ENCODE measurements at regions of chr12 and their contacts with region 1.

Region 1: GRCh38 chr12:85448548-85449139 is 168.6 kb downstream of the ALX1 start:
- DNase-seq: peak; percentile 11
- H3K4me3 ChIP-seq: no peak overlapping the region
- H3K27ac ChIP-seq: no peak overlapping the region
- H3K4me1 ChIP-seq: no peaks in the 10 kb centered on the region; a peak in 1 of 4 replicates
- H3K27me3 ChIP-seq: no peaks in the 10 kb centered on the region
- CTCF ChIP-seq: peak; percentile 61
- EP300 ChIP-seq: no peak
- RAD21 ChIP-seq: peak; percentile 75

Region 2: DNA sequence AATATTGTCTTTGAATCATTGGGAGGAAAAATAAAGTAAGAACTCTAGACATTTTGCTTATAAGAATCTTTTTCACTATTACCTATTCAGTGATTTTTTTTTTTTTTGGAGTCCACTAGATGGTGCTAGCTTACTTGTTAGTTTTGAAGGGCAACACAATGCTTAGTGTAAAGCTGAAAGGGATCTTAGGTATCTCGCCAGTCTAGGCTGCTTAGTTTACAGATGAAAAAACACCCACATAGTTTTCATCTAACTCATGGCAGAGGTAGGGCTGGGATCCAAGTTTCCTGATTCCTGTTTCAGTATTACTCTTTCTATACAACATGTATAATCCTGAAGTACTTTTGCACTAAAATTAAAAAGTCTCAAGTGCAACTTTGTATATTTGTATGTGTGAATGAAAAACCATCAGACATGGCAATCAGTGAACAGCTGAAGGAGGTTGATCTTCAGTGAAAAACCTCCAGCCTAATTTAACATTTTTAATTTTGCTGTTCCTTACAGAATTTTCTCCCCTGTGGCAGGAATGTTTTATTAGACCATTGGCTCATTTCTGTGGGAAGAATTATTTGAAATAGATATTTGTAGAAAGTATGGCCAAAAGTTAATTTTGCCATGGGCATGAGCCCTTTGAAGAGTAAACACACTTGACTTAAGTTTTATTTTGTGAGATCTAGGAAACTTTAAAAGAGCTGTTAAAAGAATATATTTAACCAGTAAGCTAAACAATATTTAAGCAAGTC is 371.8 kb before region 1 on chr12:
- CTCF ChIA-PET with region 1: interaction called, 28 read pairs
- POLR2A ChIA-PET with region 1: no interaction called
- DNase-seq: peak; percentile 12
- H3K4me3 ChIP-seq: peak overlapping the region in 1 of 2 experiments; percentile 6; a peak in 1 of 4 replicates
- H3K27ac ChIP-seq: no peak overlapping the region
- H3K4me1 ChIP-seq: peaks cover 0 to 4% of the 10 kb centered on the region in 2 experiments; a peak in 2 of 4 replicates
- H3K27me3 ChIP-seq: no peaks in the 10 kb centered on the region
- CTCF ChIP-seq: peak; percentile 75
- EP300 ChIP-seq: no peak
- RAD21 ChIP-seq: peak; percentile 81

Region 3: GRCh38 chr12:85155787-85156186 is 292.9 kb before region 1 on chr12:
- CTCF ChIA-PET with region 1: interaction called, 29 read pairs
- POLR2A ChIA-PET with region 1: no interaction called
- DNase-seq: peak; percentile 10
- H3K4me3 ChIP-seq: no peak overlapping the region
- H3K27ac ChIP-seq: no peak overlapping the region
- H3K4me1 ChIP-seq: no peaks in the 10 kb centered on the region; a peak in 1 of 4 replicates
- H3K27me3 ChIP-seq: no peaks in the 10 kb centered on the region
- CTCF ChIP-seq: peak; percentile 60
- EP300 ChIP-seq: no peak
- RAD21 ChIP-seq: peak; percentile 78

Region 4: DNA sequence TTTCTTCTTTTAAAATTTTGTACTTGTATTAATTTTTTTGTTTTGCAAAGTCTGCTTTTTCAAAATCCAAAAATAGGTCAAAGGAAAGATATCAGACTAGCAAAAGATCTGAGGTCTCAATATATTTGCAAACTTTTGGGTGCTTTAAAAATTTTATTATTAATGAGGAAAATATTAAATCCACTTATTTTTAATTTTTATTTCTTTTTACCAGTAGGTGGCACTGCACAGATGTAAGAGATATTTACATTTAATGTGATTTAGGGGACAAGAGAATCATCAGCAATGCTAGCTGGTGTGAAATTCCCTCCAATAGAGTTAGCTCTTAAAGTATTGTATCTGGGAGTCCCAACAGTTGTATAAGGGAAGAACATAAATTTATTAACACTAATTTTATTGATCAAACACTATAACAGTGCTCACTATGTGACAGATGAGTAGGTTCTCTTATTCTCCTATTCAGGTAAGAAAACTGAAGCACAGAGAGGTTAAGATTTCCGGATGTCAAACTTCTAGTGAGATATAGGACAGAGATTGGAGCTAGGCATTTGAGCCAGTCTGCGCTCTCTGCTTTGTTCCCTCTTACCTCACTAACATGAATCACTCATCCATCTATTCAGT is 138.1 kb before region 1 on chr12:
- CTCF ChIA-PET with region 1: interaction called, 11 read pairs
- POLR2A ChIA-PET with region 1: no interaction called
- DNase-seq: no peak
- H3K4me3 ChIP-seq: no peak overlapping the region
- H3K27ac ChIP-seq: no peak overlapping the region
- H3K4me1 ChIP-seq: no peaks in the 10 kb centered on the region
- H3K27me3 ChIP-seq: no peaks in the 10 kb centered on the region
- CTCF ChIP-seq: peak; percentile 67
- EP300 ChIP-seq: no peak
- RAD21 ChIP-seq: peak; percentile 23; the same call in 1 of the 2 replicates

Region 5: GRCh38 chr12:85484387-85484786 is 35.7 kb after region 1 on chr12:
- CTCF ChIA-PET with region 1: no interaction called
- POLR2A ChIA-PET with region 1: no interaction called
- DNase-seq: no peak
- H3K4me3 ChIP-seq: no peak overlapping the region
- H3K27ac ChIP-seq: no peak overlapping the region
- H3K4me1 ChIP-seq: no peaks in the 10 kb centered on the region
- H3K27me3 ChIP-seq: no peaks in the 10 kb centered on the region
- CTCF ChIP-seq: no peak
- EP300 ChIP-seq: no peak
- RAD21 ChIP-seq: no peak